ENCODE measurements at regions of chr9 and their contacts with region 1.

Region 1: GRCh38 chr9:95127249-95128176 is 190.0 kb downstream of the FANCC start:
- DNase-seq: no peak
- ATAC-seq: peak; percentile 93
- H3K4me3 ChIP-seq: no peak overlapping the region
- H3K27ac ChIP-seq: no peak overlapping the region
- H3K4me1 ChIP-seq: no peaks in the 10 kb centered on the region
- H3K27me3 ChIP-seq: no peaks in the 10 kb centered on the region
- CTCF ChIP-seq: peak; percentile 95

Region 2: GRCh38 chr9:94668418-94668932 is 459.0 kb before region 1 on chr9:
- CTCF ChIA-PET with region 1: interaction called, 3 read pairs
- POLR2A ChIA-PET with region 1: no interaction called
- in situ Hi-C with region 1: no loop called
- intact Hi-C with region 1: loop called (anchors 5 kb)
- DNase-seq: no peak
- ATAC-seq: peak; percentile 17; the same call in 1 of the 2 replicates
- H3K4me3 ChIP-seq: no peak overlapping the region; a peak in 1 of 4 replicates
- H3K27ac ChIP-seq: no peak overlapping the region
- H3K4me1 ChIP-seq: no peaks in the 10 kb centered on the region; the same call in 1 of the 2 replicates
- H3K27me3 ChIP-seq: no peaks in the 10 kb centered on the region
- CTCF ChIP-seq: no peak

Measured in Panc1 (cell line).